HEK293 (cell line): ENCODE measurements at regions of chr15 and their contacts with region 1.

Region 1: DNA sequence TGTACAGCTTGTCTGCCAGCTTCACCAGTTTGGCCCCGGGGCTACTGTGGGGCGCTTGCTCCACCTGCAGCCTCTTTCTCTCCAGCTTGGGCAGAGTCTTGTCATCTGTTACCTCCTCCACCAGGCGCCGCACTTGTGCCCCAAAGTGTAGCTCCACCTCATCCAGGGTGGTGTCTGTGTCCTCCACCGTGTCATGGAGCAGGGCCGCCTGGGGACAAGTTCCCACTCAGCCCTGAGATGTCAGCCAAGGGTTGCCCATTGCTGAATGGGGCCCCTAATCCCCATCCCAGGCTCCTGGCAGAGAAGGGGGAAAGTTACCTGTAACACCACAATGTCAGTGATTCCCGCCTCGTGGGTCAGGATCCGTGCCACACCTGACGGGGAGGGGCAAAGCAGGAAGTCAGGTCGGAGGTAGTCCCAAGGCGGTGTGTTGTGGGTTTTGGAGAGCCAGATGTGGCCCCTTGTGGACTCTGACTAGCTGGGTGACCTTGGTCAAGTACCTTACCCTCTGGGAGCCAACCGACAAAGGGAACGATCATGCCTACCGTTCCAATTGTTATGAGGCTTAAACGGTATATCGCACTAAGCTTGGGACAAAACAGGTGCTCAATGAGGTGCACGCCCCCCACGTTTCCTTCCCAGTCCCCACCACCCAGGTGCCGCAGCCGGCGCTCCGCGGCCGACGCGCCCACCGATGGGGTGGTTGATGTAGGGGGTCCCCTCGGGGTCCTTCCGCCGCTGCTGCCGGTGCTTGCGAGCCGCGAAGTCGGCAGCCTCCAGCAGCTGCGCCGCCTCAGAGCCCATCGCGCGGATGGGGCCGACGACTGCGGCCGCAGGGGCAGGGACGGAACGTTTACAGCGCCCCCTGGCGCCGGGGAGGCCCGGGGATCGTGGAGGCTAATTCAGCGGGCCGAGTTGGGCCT is at the start of gene HDDC3:
- H3K4me3 ChIP-seq: peak within 1 kb of the TSS; percentile 87
- H3K27ac ChIP-seq: peak within 1 kb of the TSS; percentile 93
- H3K4me1 ChIP-seq: 0 out of 2 replicates have a peak, but pooled peaks cover 2% of the 10 kb centered on the region
- CTCF ChIP-seq: peak; percentile 96

Region 2: DNA sequence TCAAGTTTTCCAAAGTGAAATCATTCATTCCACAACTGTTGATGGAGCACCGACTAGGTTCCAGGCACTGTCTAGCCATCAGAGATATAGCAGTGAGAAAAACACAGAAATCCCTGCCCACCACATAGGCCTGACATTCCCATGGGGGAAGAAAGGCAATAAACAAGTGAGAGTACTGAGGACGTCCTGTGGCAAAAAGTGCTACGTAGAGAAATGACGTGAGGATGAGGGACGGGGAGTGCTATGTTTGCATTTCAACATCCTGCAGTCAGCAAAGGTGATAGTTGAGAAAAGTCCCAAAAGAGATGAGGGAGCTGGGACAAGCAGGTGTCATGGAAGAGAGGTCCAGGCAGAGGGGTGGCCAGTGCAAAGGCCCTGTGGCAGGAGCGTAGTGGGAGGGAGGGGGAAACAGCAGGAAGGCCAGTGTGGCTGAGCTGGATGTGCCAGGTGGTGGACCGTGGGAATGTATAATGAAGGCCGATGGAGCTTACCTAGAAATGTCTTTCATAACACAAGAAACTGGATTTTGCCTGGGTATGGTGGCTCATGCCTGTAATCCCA is 74.0 kb before region 1 on chr15:
- CTCF ChIA-PET with region 1: no interaction called
- POLR2A ChIA-PET with region 1: no interaction called
- H3K4me3 ChIP-seq: no peak overlapping the region
- H3K27ac ChIP-seq: no peak overlapping the region
- H3K4me1 ChIP-seq: peaks cover 12% of the 10 kb centered on the region
- CTCF ChIP-seq: no peak

Region 3: GRCh38 chr15:90886041-90886614 is 45.9 kb before region 1 on chr15:
- CTCF ChIA-PET with region 1: interaction called, 29 read pairs
- POLR2A ChIA-PET with region 1: no interaction called
- H3K4me3 ChIP-seq: no peak overlapping the region
- H3K27ac ChIP-seq: no peak overlapping the region
- H3K4me1 ChIP-seq: no peaks in the 10 kb centered on the region
- CTCF ChIP-seq: peak; percentile 94

Region 4: DNA sequence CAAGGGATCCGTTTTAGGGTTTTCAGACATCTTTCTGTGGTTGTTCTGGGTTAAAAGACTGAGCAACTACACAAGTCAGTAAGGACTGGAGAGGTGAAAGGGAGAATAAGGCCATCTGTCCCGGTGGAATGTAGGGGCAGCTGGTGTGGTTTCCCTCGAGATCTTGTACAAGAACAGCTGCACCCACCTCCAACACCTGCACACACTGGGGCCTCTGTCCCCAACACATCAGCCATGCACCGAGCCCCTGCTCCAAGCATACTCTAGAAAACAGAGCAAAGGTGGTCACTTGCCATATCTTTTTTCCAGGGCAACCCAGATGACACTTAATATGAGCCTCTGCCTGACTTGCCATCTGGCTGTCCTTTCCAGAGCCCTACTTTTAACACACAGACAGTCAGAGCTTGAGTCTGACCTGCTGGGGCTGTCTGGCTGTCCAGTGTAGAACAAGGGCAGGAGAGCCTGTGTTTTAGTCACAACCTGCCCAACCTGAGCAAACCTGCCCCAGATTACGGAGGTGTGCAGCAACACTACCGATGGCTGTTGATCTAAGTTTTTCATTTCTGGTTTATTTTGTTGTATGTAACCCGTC is 16.7 kb before region 1 on chr15:
- CTCF ChIA-PET with region 1: interaction called, 82 read pairs
- POLR2A ChIA-PET with region 1: interaction called, 4 read pairs
- H3K4me3 ChIP-seq: no peak overlapping the region
- H3K27ac ChIP-seq: no peak overlapping the region
- H3K4me1 ChIP-seq: no peaks in the 10 kb centered on the region
- CTCF ChIP-seq: no peak

Region 5: GRCh38 chr15:90994417-90995311 is 62.7 kb after region 1 on chr15 and contains the start of gene PRC1:
- CTCF ChIA-PET with region 1: interaction called, 4 read pairs
- POLR2A ChIA-PET with region 1: interaction called, 12 read pairs
- H3K4me3 ChIP-seq: peak within 1 kb of the TSS; percentile 67
- H3K27ac ChIP-seq: peak within 1 kb of the TSS; percentile 98
- H3K4me1 ChIP-seq: peaks cover 9% of the 10 kb centered on the region
- CTCF ChIP-seq: no peak

Region 6: GRCh38 chr15:91032919-91033803 is 101.2 kb after region 1 on chr15:
- CTCF ChIA-PET with region 1: interaction called, 38 read pairs
- POLR2A ChIA-PET with region 1: interaction called, 3 read pairs
- H3K4me3 ChIP-seq: no peak overlapping the region
- H3K27ac ChIP-seq: no peak overlapping the region
- H3K4me1 ChIP-seq: no peaks in the 10 kb centered on the region
- CTCF ChIP-seq: peak; percentile 96

Region 7: DNA sequence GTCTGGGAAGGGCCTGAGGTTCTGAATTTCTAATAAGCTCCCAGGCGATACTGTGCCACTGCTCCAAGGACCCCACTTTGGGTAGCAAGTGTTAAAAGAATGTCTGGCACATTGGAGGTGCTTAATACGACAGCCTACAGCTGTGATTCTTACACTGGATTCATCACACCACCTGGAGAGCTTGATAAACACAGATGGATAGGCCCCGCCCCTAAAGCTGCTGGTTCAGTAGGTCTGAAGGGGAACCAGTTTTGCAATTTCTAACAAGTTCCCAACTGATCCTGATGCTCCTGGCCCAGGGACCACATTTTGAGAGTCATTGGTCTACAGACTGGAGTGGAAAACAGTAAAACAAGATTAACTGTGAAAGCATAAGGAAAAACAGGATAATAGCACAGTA is 1336.9 kb after region 1 on chr15:
- CTCF ChIA-PET with region 1: no interaction called
- POLR2A ChIA-PET with region 1: no interaction called
- H3K4me3 ChIP-seq: no peak overlapping the region
- H3K27ac ChIP-seq: no peak overlapping the region
- H3K4me1 ChIP-seq: no peaks in the 10 kb centered on the region
- CTCF ChIP-seq: no peak